Activated CD4-positive, alpha-beta memory T cell treated with anti-CD3 and anti-CD28 coated beads, Interleukin-2, amount 10 ng/mL, durations not matched to agents 7 days and 5 days (primary cell): ENCODE measurements at regions of chr1 and their contacts with region 1.

Region 1: DNA sequence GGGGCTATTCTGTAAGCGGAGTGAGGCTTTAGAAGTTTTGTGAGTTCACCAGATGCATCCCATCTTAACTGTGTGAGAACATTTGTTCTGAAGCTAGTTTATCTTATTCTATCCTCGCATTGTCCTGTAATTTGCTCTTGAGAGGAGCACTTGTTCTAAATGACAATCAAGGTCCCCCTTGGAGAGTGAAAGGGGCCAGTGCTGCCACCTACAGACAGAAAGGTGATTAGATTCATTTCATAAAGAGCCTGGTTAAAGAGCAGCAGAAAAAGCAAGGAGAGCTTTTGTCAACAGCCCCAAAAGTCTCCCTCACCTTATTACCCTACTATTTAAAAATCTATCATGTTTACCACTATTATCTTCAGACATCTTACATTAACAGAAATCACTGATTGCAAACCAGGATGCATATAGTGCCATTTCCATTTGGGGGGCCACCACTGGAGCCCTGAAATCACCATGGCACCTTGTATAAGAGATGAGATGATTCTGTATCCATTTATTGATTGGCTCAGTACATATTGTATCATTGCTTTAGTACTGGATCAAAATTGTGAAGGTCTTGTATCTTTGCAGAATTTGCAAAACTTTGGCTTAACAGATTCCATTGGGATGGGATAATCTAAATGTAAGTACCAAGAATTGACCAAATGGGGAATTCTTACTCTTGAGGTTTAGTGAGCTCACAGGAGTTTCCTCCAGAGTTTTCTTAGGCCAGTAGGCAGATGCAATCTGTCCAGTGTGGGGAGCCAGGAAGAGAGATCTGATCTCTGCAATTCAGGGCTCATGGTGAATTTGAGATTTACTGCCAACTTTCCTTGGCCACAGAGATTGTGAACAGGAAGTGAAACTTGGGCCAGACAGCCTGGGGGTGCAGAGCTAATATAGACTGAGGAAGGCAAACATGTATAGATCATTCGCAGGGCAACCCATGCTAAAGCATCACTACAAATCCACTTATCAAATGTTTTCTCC is 64.3 kb upstream of the TRABD2B start:
- DNase-seq: peak; percentile 20
- H3K4me3 Mint-ChIP-seq: no peak overlapping the region
- H3K27ac Mint-ChIP-seq: no peak overlapping the region
- H3K4me1 Mint-ChIP-seq: no peaks in the 10 kb centered on the region
- H3K27me3 Mint-ChIP-seq: peaks cover 3% of the 10 kb centered on the region

Region 2: DNA sequence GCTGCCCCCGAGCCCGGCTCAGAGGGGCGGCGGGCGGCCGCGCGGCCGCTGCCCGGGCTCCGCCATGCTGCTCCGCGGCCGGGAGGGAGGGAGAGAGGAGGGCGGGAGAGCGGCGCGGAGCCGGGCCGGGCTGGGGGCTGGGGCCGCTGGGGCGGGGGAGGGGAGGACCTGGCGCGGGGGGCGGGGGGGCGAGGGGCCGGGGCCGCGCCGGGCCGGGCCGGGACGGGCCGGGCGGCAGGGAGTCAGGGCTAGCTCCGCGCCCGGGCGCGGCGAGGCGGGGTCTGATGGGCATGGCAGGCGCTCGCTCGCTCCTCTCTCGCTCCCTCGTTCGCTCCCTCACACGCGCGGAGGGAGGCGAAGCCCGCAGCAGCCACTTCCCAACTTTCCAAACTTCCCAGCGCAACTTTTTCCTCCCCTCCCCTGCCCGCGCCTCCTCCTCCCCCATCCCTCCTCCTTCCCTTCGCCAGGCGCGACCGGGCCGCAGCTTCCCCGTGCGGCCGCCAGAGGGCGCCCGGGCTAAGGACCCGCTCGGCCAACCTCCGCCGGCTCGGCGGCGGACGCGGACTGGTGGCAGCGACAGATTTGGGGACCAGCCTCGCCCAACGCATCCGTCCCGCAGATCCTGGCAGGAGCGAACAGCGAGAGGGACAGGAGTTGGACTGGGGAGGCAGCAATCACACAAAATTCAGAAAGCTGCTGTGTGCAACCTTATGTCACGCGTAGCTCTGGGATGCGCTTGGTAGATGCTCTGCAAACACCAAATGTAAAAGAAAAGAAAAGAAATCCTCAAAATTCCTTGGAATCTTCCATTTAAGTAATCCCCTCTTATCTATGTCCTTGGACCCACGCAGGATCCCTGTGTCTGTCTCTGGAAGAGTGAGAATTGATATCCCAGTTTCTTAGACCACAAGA is 63.9 kb before region 1 on chr1 and contains the start of gene TRABD2B:
- CTCF ChIA-PET with region 1: interaction called, 33 read pairs
- POLR2A ChIA-PET with region 1: no interaction called
- DNase-seq: peak; percentile 64
- H3K4me3 Mint-ChIP-seq: peak within 1 kb of the TSS; percentile 42
- H3K27ac Mint-ChIP-seq: no peak within 1 kb of the TSS
- H3K4me1 Mint-ChIP-seq: peaks cover 6% of the 10 kb centered on the region
- H3K27me3 Mint-ChIP-seq: peaks cover 40% of the 10 kb centered on the region
- total RNA-seq, gene TRABD2B: not detected

Region 3: GRCh38 chr1:48202030-48202752 is 140.7 kb after region 1 on chr1:
- CTCF ChIA-PET with region 1: no interaction called
- POLR2A ChIA-PET with region 1: no interaction called
- DNase-seq: peak; percentile 59
- H3K4me3 Mint-ChIP-seq: no peak overlapping the region
- H3K27ac Mint-ChIP-seq: no peak overlapping the region
- H3K4me1 Mint-ChIP-seq: no peaks in the 10 kb centered on the region
- H3K27me3 Mint-ChIP-seq: peaks cover 2% of the 10 kb centered on the region